Ovary (tissue), 10 donors: ENCODE measurements at regions of chr4 and their contacts with region 1.

Region 1: DNA sequence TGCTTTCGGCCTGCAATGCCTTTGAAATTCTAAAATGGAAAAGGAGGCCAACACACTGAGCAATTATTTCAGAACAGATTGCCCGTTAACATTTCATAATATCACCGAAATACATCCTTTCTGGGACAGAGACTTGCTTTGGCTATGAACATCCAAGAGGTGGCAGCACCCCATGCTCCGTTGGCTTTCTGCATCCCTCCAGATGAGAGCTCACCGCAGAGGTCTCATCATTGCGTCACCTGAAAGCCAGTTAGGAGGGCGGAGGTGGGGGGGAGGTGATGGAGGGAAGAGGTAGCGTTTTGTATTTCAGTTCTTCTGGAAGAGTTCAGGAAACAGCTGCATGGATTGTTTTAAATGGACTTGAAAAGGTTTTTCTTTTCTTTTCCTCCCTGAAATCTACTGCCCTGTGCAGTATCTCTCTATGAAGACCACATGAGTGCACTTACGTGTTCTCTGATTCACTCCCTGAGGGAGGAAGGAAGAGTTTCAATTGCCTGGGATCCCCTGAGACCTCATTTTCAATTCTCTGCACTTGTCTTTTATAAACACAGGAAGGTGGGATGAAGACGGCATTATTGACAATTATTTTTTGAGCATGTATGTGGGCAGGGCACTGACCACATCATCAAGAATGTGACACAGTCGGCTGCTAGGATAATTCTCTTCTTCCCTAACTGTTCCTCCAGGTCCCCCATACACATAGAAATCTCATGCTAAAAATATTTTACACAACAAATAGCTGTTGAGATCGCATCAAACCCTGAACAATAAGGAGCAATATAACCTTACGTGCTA is 166.9 kb upstream of the PGRMC2 start:
- DNase-seq: peak; percentile 83 to 93 (median 84)
- H3K4me3 ChIP-seq: no peak overlapping the region
- H3K27ac ChIP-seq: no peak overlapping the region
- H3K4me1 ChIP-seq: no peaks in the 10 kb centered on the region
- H3K27me3 ChIP-seq: no peaks in the 10 kb centered on the region
- CTCF ChIP-seq: peak; percentile 56 to 83 (median 80)
- EP300 ChIP-seq: no peak
- POLR2A ChIP-seq: no peak

Region 2: GRCh38 chr4:126991965-126992364 is 1462.5 kb before region 1 on chr4:
- intact Hi-C with region 1: no loop called
- DNase-seq: no peak
- H3K4me3 ChIP-seq: no peak overlapping the region
- H3K27ac ChIP-seq: no peak overlapping the region
- H3K4me1 ChIP-seq: no peaks in the 10 kb centered on the region
- H3K27me3 ChIP-seq: no peaks in the 10 kb centered on the region
- CTCF ChIP-seq: no peak
- EP300 ChIP-seq: no peak
- POLR2A ChIP-seq: no peak

Region 3: DNA sequence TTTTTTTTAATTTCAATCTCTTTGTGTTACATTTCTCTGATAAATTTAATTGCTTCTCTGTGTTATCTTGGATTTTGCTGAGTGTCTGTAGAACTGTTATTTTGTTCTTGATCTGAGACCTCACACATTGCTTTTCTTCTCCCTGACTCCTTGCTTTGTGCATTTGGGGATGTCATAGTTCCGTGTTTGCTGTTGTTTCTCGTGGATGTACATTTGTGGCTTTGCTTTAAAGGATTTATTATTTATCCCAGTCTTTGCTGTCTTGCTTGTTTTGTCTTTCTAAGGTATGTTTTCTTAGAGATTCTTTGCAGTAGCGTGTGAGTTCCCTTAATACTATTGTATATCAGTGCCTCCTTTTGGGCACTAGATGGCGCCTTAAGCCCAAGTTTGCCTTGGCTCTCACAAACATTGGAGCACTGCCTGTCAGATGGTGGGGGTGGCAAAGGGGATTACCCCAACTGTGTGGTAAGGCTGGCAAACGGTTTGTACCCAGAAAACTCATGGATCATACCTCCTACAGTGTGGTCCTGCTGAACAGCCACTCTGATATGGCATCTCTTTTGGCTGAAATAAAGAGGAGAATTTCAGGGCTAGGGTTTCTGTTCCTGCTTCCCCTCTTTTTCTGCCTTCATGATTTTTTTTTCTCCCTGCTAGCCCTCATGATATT is 263.2 kb before region 1 on chr4:
- intact Hi-C with region 1: loop called in 1 of 4 experiments (anchors 10 kb)
- DNase-seq: peak; percentile 47 to 67 (median 56)
- H3K4me3 ChIP-seq: no peak overlapping the region
- H3K27ac ChIP-seq: no peak overlapping the region
- H3K4me1 ChIP-seq: peaks cover 1% of the 10 kb centered on the region
- H3K27me3 ChIP-seq: no peaks in the 10 kb centered on the region
- CTCF ChIP-seq: peak; percentile 59 to 76 (median 69)
- EP300 ChIP-seq: no peak
- POLR2A ChIP-seq: no peak